Activated CD4-positive, alpha-beta T cell treated with anti-CD3 and anti-CD28 coated beads for 36 hours (primary cell): ENCODE measurements at regions of chr3 and their contacts with region 1.

Region 1: DNA sequence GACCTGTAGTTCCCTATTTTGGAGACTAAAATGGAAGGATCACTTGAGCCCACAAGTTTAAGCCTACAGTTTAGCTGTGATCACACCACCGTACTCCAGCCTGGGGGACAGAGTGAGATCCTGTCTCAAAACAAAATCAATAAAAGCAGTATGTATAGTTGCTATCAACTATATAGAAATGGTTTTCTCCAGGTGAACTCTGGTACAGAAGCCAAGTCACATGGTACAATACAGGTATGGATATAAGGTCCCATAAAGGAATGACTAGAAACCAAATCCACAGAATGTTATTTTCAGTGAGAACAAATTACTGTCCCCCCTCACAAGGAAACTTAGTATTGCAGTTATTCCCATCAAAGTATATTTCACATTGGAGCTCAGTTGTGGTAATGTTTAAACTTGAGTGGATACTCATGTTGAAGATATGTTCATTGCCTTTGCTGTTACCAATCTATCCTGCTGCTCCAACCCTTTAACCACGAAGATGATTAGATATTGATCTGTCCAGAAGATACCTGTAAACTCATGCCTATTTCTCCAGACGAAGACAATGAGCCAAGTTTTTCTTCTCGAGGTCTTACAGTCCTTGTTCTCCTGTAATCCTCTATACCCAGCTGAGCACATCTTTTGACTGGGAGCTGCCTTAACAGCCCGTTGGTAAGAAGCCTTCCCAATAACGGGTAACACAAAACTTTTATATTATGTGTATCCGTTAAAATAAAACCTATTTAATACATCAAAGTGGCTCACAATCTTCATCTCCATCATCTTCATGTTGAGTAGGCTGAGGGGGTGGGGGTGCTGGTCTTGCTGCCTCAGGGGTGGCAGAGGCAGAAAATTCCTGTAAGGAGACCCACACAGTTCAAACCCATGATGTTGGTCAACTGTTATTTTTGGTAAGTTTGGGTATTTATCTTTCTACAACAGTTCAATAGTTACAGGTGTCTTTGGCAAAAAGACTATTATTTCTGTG is 24.6 kb downstream of the TRA2B start:
- DNase-seq: no peak
- ATAC-seq: peak; percentile 27
- H3K4me3 Mint-ChIP-seq: no peak overlapping the region
- H3K27ac Mint-ChIP-seq: peak overlapping the region; percentile 55
- H3K4me1 Mint-ChIP-seq: peaks cover 1% of the 10 kb centered on the region
- H3K27me3 Mint-ChIP-seq: no peaks in the 10 kb centered on the region

Region 2: GRCh38 chr3:185371306-185372074 is 541.7 kb before region 1 on chr3:
- CTCF ChIA-PET with region 1: no interaction called
- POLR2A ChIA-PET with region 1: no interaction called
- intact Hi-C with region 1: no loop called
- DNase-seq: no peak
- ATAC-seq: no peak
- H3K4me3 Mint-ChIP-seq: no peak overlapping the region
- H3K27ac Mint-ChIP-seq: no peak overlapping the region
- H3K4me1 Mint-ChIP-seq: no peaks in the 10 kb centered on the region
- H3K27me3 Mint-ChIP-seq: peaks cover 16% of the 10 kb centered on the region

Region 3: DNA sequence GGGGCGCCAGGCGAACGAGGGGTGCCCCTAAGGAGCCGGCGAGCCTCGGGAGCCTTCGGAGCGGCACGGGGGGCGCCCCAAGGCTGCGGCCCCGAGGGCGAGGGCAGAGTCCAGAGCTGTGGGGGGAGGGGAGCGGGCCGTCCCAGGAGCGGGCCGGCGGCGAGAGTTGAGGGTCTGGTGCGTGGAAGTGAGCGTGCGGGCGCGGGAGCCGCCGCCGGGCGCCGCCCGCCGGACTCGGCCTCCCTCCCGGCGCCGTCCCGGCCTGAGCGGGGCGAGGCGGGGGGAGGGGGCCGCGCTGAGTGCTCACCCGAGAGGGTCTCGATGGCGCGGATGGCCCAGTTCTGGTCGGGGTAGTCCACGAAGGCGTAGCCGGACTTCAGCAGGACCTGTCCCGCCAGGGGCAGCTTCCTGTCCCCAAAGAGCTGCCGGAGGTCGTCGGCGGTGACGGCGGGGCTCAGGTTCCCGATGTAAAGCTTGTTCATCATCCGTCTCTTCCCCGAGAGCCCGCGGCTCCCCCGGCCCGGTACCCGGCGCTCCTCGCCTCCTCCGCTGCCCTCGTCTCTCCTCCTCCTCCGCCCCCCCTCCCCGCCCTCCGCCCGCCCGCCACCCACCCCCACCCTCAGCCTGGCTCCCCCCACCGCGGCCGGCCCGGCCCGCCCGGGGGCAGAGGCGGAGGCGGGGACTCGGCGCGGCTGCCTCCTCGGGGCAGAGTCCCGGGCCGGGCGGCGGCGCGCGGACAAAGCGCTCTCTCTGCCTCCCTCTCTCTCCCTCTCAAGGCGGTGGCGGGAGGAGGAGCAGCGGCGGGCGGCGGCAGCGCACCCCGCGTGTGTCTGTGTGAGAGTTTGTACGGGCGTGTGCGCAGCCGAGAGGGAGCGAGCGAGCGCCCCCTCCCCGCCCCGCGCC is 88.5 kb before region 1 on chr3 and contains the start of gene IGF2BP2:
- CTCF ChIA-PET with region 1: no interaction called
- POLR2A ChIA-PET with region 1: interaction called, 4 read pairs
- intact Hi-C with region 1: loop called in 1 of 2 experiments (anchors 5 kb)
- DNase-seq: peak; percentile 76
- ATAC-seq: peak; percentile 84
- H3K4me3 Mint-ChIP-seq: peak within 1 kb of the TSS; percentile 74
- H3K27ac Mint-ChIP-seq: peak within 1 kb of the TSS; percentile 48
- H3K4me1 Mint-ChIP-seq: peaks cover 8% of the 10 kb centered on the region
- H3K27me3 Mint-ChIP-seq: peaks cover 59% of the 10 kb centered on the region
- total RNA-seq, gene IGF2BP2: 0.54 to 0.55 TPM